ENCODE measurements at regions of chr2 and their contacts with region 1.

Region 1: GRCh38 chr2:86562922-86563649 is at the start of gene CHMP3:
- DNase-seq: peak; percentile 98
- H3K4me3 ChIP-seq: peak within 1 kb of the TSS; percentile 52 to 65
- H3K27ac ChIP-seq: peak within 1 kb of the TSS; percentile 95
- H3K4me1 ChIP-seq: peaks cover 39% of the 10 kb centered on the region
- H3K27me3 ChIP-seq: no peaks in the 10 kb centered on the region
- CTCF ChIP-seq: no peak
- POLR2A ChIP-seq: no peak
- total RNA-seq, gene CHMP3: 49.6 TPM

Region 2: DNA sequence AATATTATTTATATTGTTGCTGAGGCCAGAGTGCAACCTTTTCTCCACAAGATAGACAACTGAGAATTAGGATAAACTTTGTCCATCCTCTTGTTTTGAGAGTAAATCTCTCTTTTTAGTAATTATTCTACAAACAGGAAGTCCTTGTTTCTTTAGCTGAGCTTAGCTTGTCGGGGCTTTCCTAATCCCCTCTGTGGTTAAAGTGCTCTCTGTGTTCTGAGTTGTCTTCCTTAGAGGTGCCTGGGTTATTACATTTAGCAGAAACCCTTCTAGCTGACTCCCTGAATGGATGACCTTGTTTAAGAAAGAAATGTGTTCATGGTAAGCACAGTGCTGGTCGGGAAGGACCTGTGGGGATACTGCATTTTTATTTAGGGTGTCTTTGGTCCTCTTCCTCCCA is 934.4 kb before region 1 on chr2:
- intact Hi-C with region 1: no loop called
- DNase-seq: no peak
- H3K4me3 ChIP-seq: no peak overlapping the region
- H3K27ac ChIP-seq: no peak overlapping the region
- H3K4me1 ChIP-seq: no peaks in the 10 kb centered on the region
- H3K27me3 ChIP-seq: no peaks in the 10 kb centered on the region
- CTCF ChIP-seq: no peak
- POLR2A ChIP-seq: no peak

Region 3: GRCh38 chr2:86286516-86286915 is 276.6 kb before region 1 on chr2:
- intact Hi-C with region 1: loop called (anchors 5 kb)
- DNase-seq: no peak
- H3K4me3 ChIP-seq: no peak overlapping the region
- H3K27ac ChIP-seq: no peak overlapping the region
- H3K4me1 ChIP-seq: no peaks in the 10 kb centered on the region
- H3K27me3 ChIP-seq: no peaks in the 10 kb centered on the region
- CTCF ChIP-seq: no peak
- POLR2A ChIP-seq: no peak

Region 4: GRCh38 chr2:86440631-86441391 is 122.3 kb before region 1 on chr2 and contains the start of gene KDM3A:
- intact Hi-C with region 1: loop called (anchors 5 kb)
- DNase-seq: peak; percentile 99 to 100
- H3K4me3 ChIP-seq: peak within 1 kb of the TSS; percentile 80 to 90
- H3K27ac ChIP-seq: peak within 1 kb of the TSS; percentile 96
- H3K4me1 ChIP-seq: peaks cover 33% of the 10 kb centered on the region
- H3K27me3 ChIP-seq: no peaks in the 10 kb centered on the region
- CTCF ChIP-seq: no peak
- POLR2A ChIP-seq: no peak
- total RNA-seq, gene KDM3A: 38.3 TPM

Region 5: GRCh38 chr2:86623651-86624541 is 60.8 kb after region 1 on chr2 and contains the start of gene RNF103:
- intact Hi-C with region 1: loop called (anchors 2 kb)
- DNase-seq: peak in 1 of 2 donors; percentile 94
- H3K4me3 ChIP-seq: peak within 1 kb of the TSS; percentile 87 to 91
- H3K27ac ChIP-seq: peak within 1 kb of the TSS; percentile 96
- H3K4me1 ChIP-seq: peaks cover 24% of the 10 kb centered on the region
- H3K27me3 ChIP-seq: no peaks in the 10 kb centered on the region
- CTCF ChIP-seq: no peak
- POLR2A ChIP-seq: peak; percentile 99
- total RNA-seq, gene RNF103: 23.3 TPM

Measured in vagina (tissue), 2 donors.